HEK293T (cell line): ENCODE measurements at regions of chr19 and their contacts with region 1.

Region 1: GRCh38 chr19:21082011-21082975 is at the start of gene ZNF714:
- DNase-seq: peak; percentile 83

Region 2: DNA sequence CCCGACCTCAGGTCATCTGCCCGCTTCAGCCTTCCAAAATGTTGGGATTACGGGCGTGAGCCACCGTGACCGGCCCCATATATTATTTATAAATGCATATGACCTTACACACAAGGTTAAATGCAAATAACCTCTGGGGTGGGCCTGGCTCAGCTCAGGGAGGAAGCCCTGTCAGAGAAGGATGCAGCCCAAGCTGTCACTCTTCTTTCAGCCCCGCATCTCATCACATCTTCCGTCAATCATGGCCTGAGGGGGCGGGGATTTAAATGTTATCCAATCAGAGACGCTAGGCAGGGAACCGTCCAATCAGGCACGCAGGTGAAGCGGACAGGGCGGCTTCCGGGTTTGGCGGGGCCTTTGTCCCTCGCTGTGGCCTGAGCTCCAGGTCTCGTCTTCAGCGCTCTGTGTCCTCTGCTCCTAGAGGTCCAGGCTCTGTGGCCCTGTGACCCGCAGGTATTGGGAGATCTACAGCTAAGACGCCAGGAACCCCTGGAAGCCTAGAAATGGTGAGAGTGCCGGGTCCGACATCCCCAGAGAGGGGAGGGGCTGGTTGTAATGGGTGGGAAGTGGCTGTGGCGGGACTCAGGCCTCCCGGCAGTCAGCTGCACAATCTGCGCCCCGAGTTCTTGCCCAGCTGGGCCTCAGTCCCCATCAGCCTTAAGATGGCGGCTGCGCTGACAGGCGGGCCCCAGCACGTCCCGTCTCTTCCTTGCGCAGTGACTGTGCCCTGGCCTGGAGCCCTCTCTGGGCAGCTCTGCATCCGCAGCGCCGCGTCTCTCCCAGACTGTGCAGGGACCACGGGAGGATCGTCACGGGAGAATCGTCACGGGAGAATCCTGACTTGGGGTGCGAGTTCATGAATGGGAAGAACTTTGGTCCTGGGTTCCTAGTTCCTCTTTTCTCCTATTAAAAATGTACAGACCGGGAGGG is 61.7 kb before region 1 on chr19 and contains the start of gene ZNF430:
- CTCF ChIA-PET with region 1: no interaction called
- POLR2A ChIA-PET with region 1: interaction called, 13 read pairs
- DNase-seq: peak; percentile 83

Region 3: GRCh38 chr19:21141787-21142464 is 59.6 kb after region 1 on chr19 and contains the start of gene ZNF431:
- CTCF ChIA-PET with region 1: no interaction called
- POLR2A ChIA-PET with region 1: interaction called, 12 read pairs
- DNase-seq: peak; percentile 78

Region 4: GRCh38 chr19:21197590-21198295 is 115.5 kb after region 1 on chr19:
- CTCF ChIA-PET with region 1: no interaction called
- POLR2A ChIA-PET with region 1: no interaction called
- DNase-seq: no peak